Head of caudate nucleus (tissue), 42 donors: ENCODE measurements at regions of chr17 and their contacts with region 1.

Region 1: GRCh38 chr17:68759343-68760132 is 158.4 kb upstream of the FAM20A start:
- DNase-seq: peak; percentile 69 to 96 (median 88)

Region 2: DNA sequence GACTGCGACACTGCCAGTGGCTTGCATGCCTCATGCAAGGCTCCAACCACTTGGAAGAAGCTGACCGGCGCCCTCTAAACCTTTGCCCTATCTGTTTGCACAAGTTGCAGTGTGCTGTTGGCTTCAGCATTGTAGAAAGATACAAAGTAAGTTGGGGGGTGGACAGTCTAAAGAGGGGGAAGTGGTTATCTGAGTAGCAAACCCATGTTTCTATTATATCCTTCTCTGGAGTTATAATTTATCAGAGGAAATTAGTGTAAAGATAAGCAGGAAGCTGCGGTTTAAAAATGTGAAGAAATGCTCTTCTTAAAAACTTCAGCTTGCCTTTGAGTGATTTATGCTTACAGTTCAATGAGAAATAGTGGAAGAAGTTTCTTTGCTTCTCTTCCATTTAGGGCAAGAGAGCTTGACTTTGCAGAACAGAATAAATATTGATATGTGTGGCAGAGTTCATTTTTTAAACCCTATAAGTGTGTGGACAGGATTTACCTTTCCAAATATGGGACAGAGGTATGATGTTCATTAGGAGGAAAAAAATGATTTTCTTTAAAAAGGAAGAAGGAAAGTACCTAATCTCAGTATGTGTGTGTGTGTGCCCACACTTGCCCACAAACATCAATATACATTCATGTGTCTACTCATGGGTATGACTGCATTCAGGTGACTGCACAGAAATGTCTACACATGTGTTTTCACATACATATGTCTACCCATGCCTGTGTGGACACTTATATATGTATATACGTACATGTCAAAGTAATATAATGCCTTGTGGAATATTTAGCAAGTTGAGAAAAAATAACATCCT is 503.6 kb before region 1 on chr17:
- intact Hi-C with region 1: loop called (anchors 10 kb)
- DNase-seq: no peak

Region 3: DNA sequence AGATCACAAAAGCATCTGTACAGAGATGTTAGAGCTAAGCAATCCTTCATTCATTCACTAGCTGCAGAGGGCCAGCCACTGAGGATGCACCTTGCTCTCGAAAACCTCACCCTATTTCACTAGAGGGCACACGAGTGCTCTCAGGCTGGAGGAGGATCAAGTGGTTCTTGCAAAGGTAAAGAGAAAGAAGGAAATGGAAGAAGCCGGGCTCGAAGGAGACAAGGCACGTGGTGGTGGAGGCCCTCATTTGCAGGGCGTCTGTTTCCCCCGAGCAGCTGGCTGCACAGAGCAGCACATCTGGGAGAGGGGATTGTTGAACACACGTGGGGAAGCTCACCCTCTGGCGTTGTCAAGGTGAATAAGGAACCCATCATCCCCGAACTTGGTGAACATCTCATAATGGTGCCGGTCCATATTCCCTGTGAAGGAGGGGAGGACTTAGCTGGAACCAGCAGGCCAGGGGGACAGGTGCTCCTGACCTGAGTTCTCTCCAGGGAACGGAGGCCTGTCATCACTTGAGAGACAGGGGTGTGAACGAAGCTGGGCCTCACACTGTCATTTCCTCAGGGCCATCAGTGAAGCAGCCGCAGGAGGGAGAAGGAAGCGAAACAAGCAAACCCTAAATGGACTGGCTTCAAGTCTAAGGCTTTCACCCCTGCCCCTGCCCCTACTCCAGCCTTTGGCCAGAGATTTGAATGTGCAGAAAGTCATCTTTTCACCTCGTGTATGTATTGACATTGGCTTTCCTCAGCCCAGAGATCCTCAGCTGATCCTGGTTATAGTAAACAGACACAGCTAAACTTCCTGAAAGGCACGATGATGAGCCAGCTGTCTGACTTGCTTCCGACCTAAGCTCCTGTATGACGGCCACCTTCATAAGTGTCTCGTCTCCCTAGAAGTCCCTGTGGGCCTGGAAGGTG is 219.7 kb before region 1 on chr17:
- intact Hi-C with region 1: loop called (anchors 10 kb)
- DNase-seq: peak in 31 of 42 donors; percentile 9 to 75 (median 36)